ENCODE measurements at regions of chr4 and their contacts with region 1.

Region 1: GRCh38 chr4:2220016-2220630 is 21.8 kb downstream of the HAUS3 start:
- DNase-seq: peak; percentile 85
- ATAC-seq: peak; percentile 96
- H3K4me3 Mint-ChIP-seq: no peak overlapping the region
- H3K27ac Mint-ChIP-seq: no peak overlapping the region
- H3K4me1 Mint-ChIP-seq: peaks cover 13% of the 10 kb centered on the region
- H3K27me3 Mint-ChIP-seq: no peaks in the 10 kb centered on the region

Region 2: GRCh38 chr4:2116687-2117400 is 103.3 kb before region 1 on chr4:
- CTCF ChIA-PET with region 1: no interaction called
- DNase-seq: no peak
- ATAC-seq: no peak
- H3K4me3 Mint-ChIP-seq: no peak overlapping the region
- H3K27ac Mint-ChIP-seq: no peak overlapping the region
- H3K4me1 Mint-ChIP-seq: no peaks in the 10 kb centered on the region
- H3K27me3 Mint-ChIP-seq: peaks cover 8% of the 10 kb centered on the region

Region 3: GRCh38 chr4:2241410-2242353 is 21.6 kb after region 1 on chr4 and contains the starts of genes HAUS3 and POLN:
- CTCF ChIA-PET with region 1: interaction called, 24 read pairs
- DNase-seq: peak; percentile 99
- ATAC-seq: peak; percentile 93
- H3K4me3 Mint-ChIP-seq: peak within 1 kb of the TSS; percentile 84
- H3K27ac Mint-ChIP-seq: peak within 1 kb of the TSS; percentile 91
- H3K4me1 Mint-ChIP-seq: peaks cover 47% of the 10 kb centered on the region
- H3K27me3 Mint-ChIP-seq: no peaks in the 10 kb centered on the region
- total RNA-seq, gene HAUS3: 29.8 to 34.5 TPM
- total RNA-seq, gene POLN: 5.5 to 5.6 TPM

Region 4: DNA sequence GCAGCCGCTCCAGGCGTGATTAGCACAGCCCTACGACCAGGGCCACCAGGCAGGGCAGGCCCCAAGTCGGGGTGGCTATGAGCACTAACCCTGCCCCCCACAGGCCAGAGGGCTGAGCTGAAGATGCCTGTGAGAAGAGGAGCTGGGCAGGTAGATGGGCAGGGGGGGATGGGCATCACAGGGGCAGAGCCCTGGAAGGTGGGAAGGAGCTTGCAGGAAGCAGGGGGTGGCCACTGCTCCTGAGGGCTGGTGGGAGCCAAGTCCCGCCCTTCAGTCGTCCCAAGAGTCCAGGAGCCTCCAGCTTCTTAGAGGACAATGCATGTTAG is 49.0 kb after region 1 on chr4:
- CTCF ChIA-PET with region 1: no interaction called
- DNase-seq: no peak
- ATAC-seq: no peak
- H3K4me3 Mint-ChIP-seq: no peak overlapping the region
- H3K27ac Mint-ChIP-seq: no peak overlapping the region
- H3K4me1 Mint-ChIP-seq: no peaks in the 10 kb centered on the region
- H3K27me3 Mint-ChIP-seq: no peaks in the 10 kb centered on the region

Region 5: DNA sequence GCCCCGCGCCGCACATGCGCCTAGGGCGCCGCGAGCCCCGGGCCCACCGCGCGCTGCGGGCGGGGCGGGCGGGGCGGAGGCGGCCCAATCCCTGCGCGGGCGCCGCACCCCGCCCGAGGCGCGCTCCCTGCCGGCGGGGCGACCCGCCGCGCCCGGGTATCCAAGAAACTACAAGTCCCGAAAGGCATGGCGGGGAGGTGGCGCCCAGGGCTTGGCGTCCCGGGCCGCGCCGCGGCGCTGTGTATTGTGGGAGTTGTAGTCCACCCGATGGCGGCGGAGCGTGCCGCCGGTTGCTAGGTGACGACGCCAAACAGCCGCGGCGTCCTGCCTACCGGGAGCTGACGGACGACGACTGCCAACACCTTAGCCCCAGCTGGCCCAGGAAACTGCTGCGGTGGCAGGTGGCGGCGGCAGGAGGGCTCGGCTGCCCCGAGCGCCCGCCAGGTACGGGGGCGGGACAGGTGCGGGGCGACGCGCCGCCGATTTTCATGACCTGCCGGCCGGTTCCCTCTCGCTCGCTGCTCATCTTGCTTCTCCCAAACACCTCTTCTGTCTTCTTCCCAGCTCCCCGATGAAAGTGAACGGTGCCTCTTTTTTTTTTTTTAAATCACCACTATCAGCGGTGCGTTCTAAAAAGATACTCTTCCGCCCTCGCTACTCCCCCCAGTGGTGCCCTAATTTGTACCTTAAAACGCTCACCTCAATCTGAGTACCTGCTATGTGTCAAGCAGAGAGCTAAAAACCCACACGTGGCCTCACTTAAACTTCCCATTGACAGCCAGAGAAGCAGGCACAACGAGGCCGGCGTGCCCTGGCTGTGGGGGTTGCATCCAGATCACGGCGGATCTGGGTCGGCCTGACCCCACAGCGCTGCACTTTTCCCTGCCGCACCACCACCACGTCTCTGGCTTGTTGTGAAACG is 198.8 kb after region 1 on chr4 and contains the start of gene CFAP99:
- CTCF ChIA-PET with region 1: interaction called, 15 read pairs
- DNase-seq: peak; percentile 99
- ATAC-seq: peak; percentile 90
- H3K4me3 Mint-ChIP-seq: peak within 1 kb of the TSS; percentile 85
- H3K27ac Mint-ChIP-seq: peak within 1 kb of the TSS; percentile 61
- H3K4me1 Mint-ChIP-seq: peaks cover 40% of the 10 kb centered on the region
- H3K27me3 Mint-ChIP-seq: peaks cover 45% of the 10 kb centered on the region
- total RNA-seq, gene CFAP99: not detected

Region 6: DNA sequence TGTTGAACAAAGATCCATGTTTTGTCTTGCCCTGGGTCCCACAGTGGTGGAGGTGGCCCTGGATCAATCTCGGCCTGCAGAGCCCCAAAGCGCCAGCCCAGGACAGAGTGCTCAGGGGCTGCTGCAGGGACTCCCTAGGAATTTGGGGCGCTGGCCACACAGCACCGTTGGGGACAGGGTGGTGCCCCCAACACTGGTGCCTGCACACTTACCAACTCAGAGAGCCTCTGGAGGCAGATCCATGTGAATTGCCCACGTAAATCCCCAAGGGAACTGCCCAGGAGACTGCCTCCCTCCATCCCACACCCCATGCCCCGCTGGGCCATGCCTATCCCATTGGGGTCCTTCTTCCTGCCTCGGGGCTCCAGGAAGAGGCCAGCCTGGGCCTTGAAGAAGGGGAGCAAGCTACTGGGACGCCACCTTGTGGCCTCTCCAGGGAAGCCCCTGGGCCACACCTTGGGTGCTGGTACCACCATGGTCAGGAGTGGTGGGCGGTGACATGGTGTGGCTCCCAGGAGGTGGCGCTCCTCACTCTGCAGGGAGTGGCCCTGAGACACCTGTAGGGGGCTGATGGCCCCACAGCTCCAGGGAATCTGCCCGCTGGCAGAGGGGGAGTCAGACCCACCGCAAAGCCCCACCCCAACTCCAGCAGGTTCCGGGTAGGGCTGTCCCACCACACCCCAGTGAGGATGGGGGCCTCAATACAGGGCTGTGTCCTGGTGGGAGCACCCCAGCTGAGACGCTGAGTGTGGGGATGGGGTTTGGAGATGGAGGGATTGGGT is 221.5 kb after region 1 on chr4:
- CTCF ChIA-PET with region 1: interaction called, 71 read pairs
- DNase-seq: peak; percentile 88
- ATAC-seq: peak; percentile 96
- H3K4me3 Mint-ChIP-seq: no peak overlapping the region
- H3K27ac Mint-ChIP-seq: no peak overlapping the region
- H3K4me1 Mint-ChIP-seq: peaks cover 3% of the 10 kb centered on the region
- H3K27me3 Mint-ChIP-seq: no peaks in the 10 kb centered on the region

Region 7: GRCh38 chr4:2462218-2462991 is 242.3 kb after region 1 on chr4:
- CTCF ChIA-PET with region 1: interaction called, 12 read pairs
- DNase-seq: peak; percentile 70
- ATAC-seq: peak; percentile 97
- H3K4me3 Mint-ChIP-seq: peak overlapping the region; percentile 47
- H3K27ac Mint-ChIP-seq: no peak overlapping the region
- H3K4me1 Mint-ChIP-seq: peaks cover 17% of the 10 kb centered on the region
- H3K27me3 Mint-ChIP-seq: peaks cover 14% of the 10 kb centered on the region

Region 8: GRCh38 chr4:2468445-2469192 is 248.5 kb after region 1 on chr4 and contains the start of gene RNF4:
- CTCF ChIA-PET with region 1: interaction called, 12 read pairs
- DNase-seq: peak; percentile 98
- ATAC-seq: peak; percentile 85
- H3K4me3 Mint-ChIP-seq: peak within 1 kb of the TSS; percentile 93
- H3K27ac Mint-ChIP-seq: peak within 1 kb of the TSS; percentile 98
- H3K4me1 Mint-ChIP-seq: peaks cover 46% of the 10 kb centered on the region
- H3K27me3 Mint-ChIP-seq: no peaks in the 10 kb centered on the region
- total RNA-seq, gene RNF4: 108 to 116 TPM

Region 9: GRCh38 chr4:2647403-2648158 is 427.5 kb after region 1 on chr4:
- CTCF ChIA-PET with region 1: no interaction called
- DNase-seq: no peak
- ATAC-seq: no peak
- H3K4me3 Mint-ChIP-seq: no peak overlapping the region
- H3K27ac Mint-ChIP-seq: no peak overlapping the region
- H3K4me1 Mint-ChIP-seq: peaks cover 14% of the 10 kb centered on the region
- H3K27me3 Mint-ChIP-seq: no peaks in the 10 kb centered on the region